Activated CD4-positive, alpha-beta T cell treated with anti-CD3 and anti-CD28 coated beads for 36 hours (primary cell): ENCODE measurements at regions of chr6 and their contacts with region 1.

Region 1: DNA sequence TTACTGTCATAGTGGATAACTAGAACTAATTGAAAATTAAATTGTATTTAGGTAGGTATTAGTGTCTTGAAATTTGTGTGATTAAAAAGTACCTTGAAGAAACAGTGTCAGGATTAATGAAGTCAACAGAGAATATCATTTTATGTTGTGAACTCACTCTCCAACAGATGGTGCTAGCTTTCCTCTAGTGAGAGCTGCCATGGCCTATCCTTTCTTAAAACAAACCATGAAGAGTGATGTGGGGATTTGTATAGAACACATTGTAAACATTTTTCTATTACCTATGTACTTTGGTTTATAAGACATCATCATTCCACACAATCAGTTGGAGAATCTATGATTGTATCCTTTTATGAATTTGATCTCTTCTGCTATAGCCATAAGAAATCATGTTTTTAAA is 4.8 kb upstream of the SRSF12 start:
- DNase-seq: no peak
- ATAC-seq: peak; percentile 71
- H3K4me3 Mint-ChIP-seq: no peak overlapping the region
- H3K27ac Mint-ChIP-seq: no peak overlapping the region
- H3K4me1 Mint-ChIP-seq: no peaks in the 10 kb centered on the region
- H3K27me3 Mint-ChIP-seq: no peaks in the 10 kb centered on the region

Region 2: DNA sequence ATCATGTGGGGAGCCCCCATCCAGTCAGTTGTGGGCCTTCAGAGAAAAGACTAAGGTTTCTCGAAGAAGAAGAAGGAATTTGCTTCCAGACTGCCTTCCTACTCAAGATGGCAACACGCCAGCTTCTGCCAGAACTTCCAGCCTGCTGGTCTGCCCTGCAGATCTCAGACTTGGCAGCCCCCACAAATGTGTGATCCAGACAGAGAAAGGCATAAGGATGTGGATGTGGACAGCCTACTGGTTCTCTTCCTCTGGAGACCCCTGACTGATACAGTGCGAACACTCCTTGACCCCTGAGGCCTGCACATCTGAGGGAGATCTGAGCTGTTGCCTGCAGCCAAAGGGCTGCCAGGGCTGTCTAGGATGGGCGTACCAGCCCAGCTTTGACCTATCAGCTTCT is 85.9 kb after region 1 on chr6:
- CTCF ChIA-PET with region 1: no interaction called
- POLR2A ChIA-PET with region 1: no interaction called
- intact Hi-C with region 1: no loop called
- DNase-seq: no peak
- ATAC-seq: no peak
- H3K4me3 Mint-ChIP-seq: no peak overlapping the region
- H3K27ac Mint-ChIP-seq: no peak overlapping the region
- H3K4me1 Mint-ChIP-seq: no peaks in the 10 kb centered on the region
- H3K27me3 Mint-ChIP-seq: peaks cover 4% of the 10 kb centered on the region

Region 3: DNA sequence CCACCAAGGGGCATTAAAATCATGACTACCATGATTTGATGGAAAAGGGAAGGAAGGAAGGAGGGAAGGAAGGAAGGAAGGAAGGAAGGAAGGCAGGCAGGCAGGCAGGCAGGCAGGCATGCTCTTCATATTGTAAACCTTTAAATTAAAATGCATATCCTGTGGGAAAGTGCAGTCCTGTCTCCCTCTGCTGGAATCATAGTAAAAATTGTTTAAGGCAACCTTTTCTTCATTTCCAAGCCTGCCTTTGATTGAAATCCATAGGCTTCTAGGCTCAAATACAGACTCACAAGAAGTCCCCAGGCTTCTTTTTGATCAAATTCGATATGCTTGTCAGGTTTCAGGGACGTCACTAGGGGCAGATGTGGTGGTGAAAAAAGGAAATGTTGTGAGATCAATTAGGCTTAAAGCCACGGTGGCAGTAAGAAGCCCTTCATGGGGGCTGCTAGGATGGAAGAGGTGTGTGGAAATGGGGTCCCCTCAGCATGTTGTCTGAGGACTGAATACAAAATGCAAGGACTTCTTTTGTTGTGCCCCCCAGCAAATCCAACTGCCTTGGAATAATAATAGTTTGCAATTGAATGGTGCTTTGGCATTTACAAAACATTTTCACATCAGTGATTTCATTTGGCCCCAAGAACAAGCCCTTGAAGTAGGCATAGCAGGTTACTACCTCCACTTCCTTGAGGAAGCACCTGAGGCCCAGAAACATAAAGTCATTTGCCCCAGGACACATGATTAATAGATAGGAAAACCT is 120.1 kb after region 1 on chr6:
- CTCF ChIA-PET with region 1: interaction called, 5 read pairs
- POLR2A ChIA-PET with region 1: no interaction called
- intact Hi-C with region 1: loop called (anchors 1 to 2 kb)
- DNase-seq: peak; percentile 14
- ATAC-seq: peak; percentile 49
- H3K4me3 Mint-ChIP-seq: no peak overlapping the region
- H3K27ac Mint-ChIP-seq: no peak overlapping the region
- H3K4me1 Mint-ChIP-seq: peaks cover 12% of the 10 kb centered on the region
- H3K27me3 Mint-ChIP-seq: peaks cover 6% of the 10 kb centered on the region